Activated naive CD4-positive, alpha-beta T cell treated with anti-CD3 and anti-CD28 coated beads, Interleukin-2, amount 10 ng/mL, durations not matched to agents 7 days and 5 days (primary cell): ENCODE measurements at regions of chr6 and their contacts with region 1.

Region 1: DNA sequence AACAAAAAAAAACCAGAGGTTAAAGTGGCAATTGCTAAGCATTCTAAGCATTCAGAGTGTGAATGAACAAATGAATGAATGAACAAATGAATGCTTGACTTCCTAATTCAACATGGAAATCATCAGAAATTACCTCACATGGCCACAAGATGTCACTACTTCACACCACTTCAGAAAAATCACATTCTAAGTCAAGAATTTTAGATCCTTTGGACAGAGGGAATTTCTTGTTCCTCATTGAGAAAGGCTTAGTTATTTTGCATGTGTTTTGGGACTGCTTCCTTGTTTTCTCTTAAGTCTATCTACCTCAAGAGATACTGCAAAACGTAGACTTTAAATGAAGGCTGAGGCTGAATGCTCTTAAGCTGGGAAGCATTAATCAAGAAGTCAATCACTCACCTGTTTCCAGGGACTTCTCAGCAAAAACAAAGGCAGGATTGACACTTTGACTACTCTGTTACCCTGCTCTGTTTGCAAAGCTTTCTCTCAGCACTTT is 120.2 kb downstream of the MBOAT1 start:
- DNase-seq: no peak
- H3K4me3 Mint-ChIP-seq: no peak overlapping the region
- H3K27ac Mint-ChIP-seq: no peak overlapping the region
- H3K4me1 Mint-ChIP-seq: no peaks in the 10 kb centered on the region
- H3K27me3 Mint-ChIP-seq: no peaks in the 10 kb centered on the region

Region 2: DNA sequence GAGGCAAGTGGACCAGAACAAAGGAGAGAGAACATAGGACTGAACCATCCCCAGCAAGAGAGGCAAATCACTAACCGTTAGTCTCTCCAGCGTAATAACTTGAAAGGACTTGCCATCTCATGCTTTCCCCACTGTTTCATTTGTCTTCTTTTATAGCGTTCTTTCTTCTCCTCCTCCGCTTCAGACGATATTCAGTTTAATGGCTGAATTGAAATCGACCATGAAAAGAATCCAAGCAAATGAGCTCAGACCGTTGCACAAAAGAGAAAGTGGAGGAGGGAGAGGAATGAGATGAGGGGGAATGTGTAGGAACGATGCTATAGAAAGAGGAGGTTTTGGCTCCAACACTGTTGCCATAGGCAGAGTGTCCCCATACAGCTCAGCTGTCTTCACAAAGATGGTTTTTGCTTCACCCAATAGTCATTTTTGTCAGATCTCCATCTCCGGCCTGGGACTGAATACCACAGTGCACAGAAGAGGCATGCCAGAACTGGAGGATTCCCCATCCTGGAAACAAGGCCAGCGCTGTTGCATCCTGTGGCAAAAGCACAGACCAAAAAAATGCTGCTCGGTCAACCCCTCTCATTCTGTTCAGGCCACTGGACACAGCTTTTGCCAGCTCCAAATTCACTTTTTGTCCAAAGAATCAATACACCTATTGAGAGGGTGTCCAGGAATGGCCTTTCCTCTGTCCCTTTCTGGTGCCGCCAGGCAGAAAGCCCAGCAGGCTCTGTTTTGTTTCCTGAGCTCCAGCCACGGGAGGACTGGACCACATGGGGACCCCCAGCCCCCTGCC is 78.9 kb before region 1 on chr6:
- CTCF ChIA-PET with region 1: no interaction called
- DNase-seq: no peak
- H3K4me3 Mint-ChIP-seq: no peak overlapping the region
- H3K27ac Mint-ChIP-seq: no peak overlapping the region
- H3K4me1 Mint-ChIP-seq: no peaks in the 10 kb centered on the region
- H3K27me3 Mint-ChIP-seq: peaks cover 18% of the 10 kb centered on the region

Region 3: GRCh38 chr6:20271818-20272217 is 179.7 kb after region 1 on chr6:
- CTCF ChIA-PET with region 1: interaction called, 21 read pairs
- DNase-seq: no peak
- H3K4me3 Mint-ChIP-seq: no peak overlapping the region
- H3K27ac Mint-ChIP-seq: no peak overlapping the region
- H3K4me1 Mint-ChIP-seq: peaks cover 8% of the 10 kb centered on the region
- H3K27me3 Mint-ChIP-seq: peaks cover 15% of the 10 kb centered on the region